Esophagus muscularis mucosa (tissue), 4 donors: ENCODE measurements at regions of chr9 and their contacts with region 1.

Region 1: GRCh38 chr9:37163299-37163698 is 42.9 kb downstream of the ZCCHC7 start:
- DNase-seq: no peak
- H3K4me3 ChIP-seq: no peak overlapping the region
- H3K27ac ChIP-seq: no peak overlapping the region
- H3K4me1 ChIP-seq: no peaks in the 10 kb centered on the region
- H3K27me3 ChIP-seq: no peaks in the 10 kb centered on the region
- CTCF ChIP-seq: no peak
- EP300 ChIP-seq: no peak
- POLR2A ChIP-seq: no peak

Region 2: DNA sequence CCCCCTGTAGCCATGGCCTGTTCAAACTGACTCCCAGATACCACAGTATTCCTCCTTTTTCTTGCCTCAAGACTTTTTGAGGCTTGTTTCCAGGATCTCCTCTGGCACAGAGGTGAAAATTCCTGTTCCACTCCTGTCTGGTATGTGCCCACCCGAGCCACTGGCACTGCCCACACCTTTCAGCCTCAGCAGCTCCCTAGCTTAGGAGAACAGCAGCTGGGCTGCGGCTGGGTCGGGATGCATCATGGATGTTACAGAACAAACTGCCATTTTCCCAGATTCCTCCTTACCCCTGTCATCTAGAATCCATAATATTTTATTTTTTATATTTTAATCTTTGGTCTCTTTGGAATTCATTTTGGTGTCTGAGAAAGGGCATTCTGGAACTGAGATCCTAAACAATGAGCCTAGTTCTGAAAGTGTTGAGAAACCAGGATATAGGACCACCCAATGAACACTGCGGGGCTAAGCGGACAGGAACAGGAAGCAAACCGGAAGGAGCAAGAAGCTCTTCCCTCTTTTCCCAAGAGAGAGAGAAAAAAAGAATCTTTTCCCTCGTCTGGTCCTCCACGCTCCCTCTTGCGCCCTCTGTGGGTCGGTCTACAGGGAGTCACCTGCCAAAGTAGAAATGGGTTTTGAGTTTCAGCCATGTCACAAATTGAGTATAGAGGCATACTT is 1217.8 kb before region 1 on chr9:
- intact Hi-C with region 1: no loop called
- DNase-seq: no peak
- H3K4me3 ChIP-seq: peak overlapping the region in 3 of 4 donors; percentile 3 to 15 (median 12)
- H3K27ac ChIP-seq: peak overlapping the region in 3 of 4 donors; percentile 18 to 39 (median 20)
- H3K4me1 ChIP-seq: peaks cover 6 to 16% (median 12%) of the 10 kb centered on the region in 4 donors
- H3K27me3 ChIP-seq: no peaks in the 10 kb centered on the region
- CTCF ChIP-seq: peak; percentile 82 to 90 (median 86)
- EP300 ChIP-seq: no peak
- POLR2A ChIP-seq: no peak

Region 3: GRCh38 chr9:37104183-37104889 is 59.0 kb before region 1 on chr9:
- intact Hi-C with region 1: no loop called
- DNase-seq: no peak
- H3K4me3 ChIP-seq: no peak overlapping the region
- H3K27ac ChIP-seq: no peak overlapping the region
- H3K4me1 ChIP-seq: no peaks in the 10 kb centered on the region
- H3K27me3 ChIP-seq: peaks cover 0 to 9% (median 0%) of the 10 kb centered on the region in 4 donors
- CTCF ChIP-seq: no peak
- EP300 ChIP-seq: no peak
- POLR2A ChIP-seq: no peak

Region 4: DNA sequence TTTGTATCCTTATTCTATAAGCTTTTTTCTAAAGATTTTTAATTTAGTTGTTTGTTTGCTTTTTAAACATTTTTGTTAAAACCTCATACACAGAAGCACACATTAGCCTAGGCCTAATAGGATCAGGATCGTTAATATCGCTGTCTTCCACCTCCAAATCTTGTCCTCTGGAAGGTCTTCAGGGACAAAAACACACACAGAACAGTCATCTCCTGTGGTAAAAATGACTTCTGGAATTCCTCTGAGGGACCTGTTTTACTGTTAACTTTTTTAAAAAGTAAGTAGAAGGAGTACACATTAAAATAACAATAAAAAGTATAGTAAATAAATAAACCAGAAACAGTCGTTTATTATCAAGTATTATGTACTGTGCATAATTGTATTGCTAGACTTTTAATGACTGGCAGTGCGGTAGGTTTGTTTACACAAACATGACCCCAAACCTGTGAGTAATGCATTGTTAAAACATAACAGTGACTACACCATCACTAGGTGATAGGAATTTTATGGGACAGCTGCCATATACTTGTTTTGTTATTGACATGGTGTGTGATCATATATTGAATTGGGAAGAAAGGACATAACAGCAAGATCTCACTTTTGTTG is 66.7 kb after region 1 on chr9:
- intact Hi-C with region 1: loop called (anchors 10 kb)
- DNase-seq: no peak
- H3K4me3 ChIP-seq: no peak overlapping the region
- H3K27ac ChIP-seq: no peak overlapping the region
- H3K4me1 ChIP-seq: no peaks in the 10 kb centered on the region
- H3K27me3 ChIP-seq: no peaks in the 10 kb centered on the region
- CTCF ChIP-seq: no peak
- EP300 ChIP-seq: no peak
- POLR2A ChIP-seq: no peak